ENCODE measurements at regions of chr1 and their contacts with region 1.

Region 1: GRCh38 chr1:181021811-181022434 is 747 bp downstream of the STX6 start:
- DNase-seq: peak; percentile 86
- H3K4me3 Mint-ChIP-seq: peak overlapping the region; percentile 93
- H3K27ac Mint-ChIP-seq: peak overlapping the region; percentile 91
- H3K4me1 Mint-ChIP-seq: peaks cover 19% of the 10 kb centered on the region
- H3K27me3 Mint-ChIP-seq: no peaks in the 10 kb centered on the region
- CTCF ChIP-seq: no peak

Region 2: GRCh38 chr1:180502360-180503273 is 519.3 kb before region 1 on chr1 and contains the start of gene ACBD6:
- CTCF ChIA-PET with region 1: interaction called, 3 read pairs
- POLR2A ChIA-PET with region 1: interaction called, 30 read pairs
- intact Hi-C with region 1: no loop called
- DNase-seq: peak; percentile 94
- H3K4me3 Mint-ChIP-seq: peak within 1 kb of the TSS; percentile 94
- H3K27ac Mint-ChIP-seq: peak within 1 kb of the TSS; percentile 97
- H3K4me1 Mint-ChIP-seq: peaks cover 29% of the 10 kb centered on the region
- H3K27me3 Mint-ChIP-seq: no peaks in the 10 kb centered on the region
- CTCF ChIP-seq: no peak
- total RNA-seq, gene ACBD6: 123 and 136 TPM in 2 replicates

Region 3: GRCh38 chr1:180923021-180923841 is 98.7 kb before region 1 on chr1:
- CTCF ChIA-PET with region 1: no interaction called
- POLR2A ChIA-PET with region 1: no interaction called
- intact Hi-C with region 1: no loop called
- DNase-seq: peak; percentile 53
- H3K4me3 Mint-ChIP-seq: no peak overlapping the region
- H3K27ac Mint-ChIP-seq: no peak overlapping the region
- H3K4me1 Mint-ChIP-seq: peaks cover 9% of the 10 kb centered on the region
- H3K27me3 Mint-ChIP-seq: no peaks in the 10 kb centered on the region
- CTCF ChIP-seq: no peak

Region 4: DNA sequence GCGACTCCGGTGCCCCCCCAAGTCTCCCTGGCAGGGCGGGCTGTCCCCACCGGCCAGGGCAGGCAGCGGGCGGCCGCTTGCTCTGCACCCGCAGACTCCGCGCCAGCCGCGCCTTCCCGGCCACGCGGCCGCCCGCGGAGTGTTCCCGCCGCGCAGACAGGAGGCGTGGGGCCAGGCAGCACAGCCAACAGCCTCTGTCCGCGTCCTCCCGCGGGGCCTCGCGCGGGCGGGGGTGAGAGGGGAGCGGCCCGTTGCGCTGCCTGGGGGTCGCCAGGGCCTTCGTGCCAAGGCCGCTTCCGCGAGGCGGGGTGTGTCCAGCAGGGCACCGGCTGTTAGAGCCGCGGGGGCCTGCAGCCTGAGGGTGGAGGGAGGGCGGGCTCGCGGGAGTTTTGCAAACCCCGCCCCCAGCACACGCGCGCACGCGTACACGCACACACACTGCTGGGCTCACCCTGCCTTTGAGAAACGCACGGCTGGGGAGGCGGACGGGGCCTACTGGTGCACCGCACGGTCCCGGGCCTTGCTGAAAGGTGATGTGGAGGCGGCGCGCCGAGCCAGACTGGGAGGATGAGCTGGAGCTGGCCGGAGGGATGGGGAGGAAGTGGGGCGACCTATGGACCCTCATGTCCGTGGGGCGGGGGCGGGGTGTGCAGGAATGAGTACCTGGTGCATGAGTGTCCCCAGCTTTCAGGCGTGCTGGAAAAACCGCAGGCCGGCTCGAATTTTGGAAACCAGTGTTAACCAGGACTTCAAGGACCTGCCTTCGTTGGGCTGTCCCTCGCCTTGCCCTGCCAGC is 67.7 kb before region 1 on chr1:
- CTCF ChIA-PET with region 1: interaction called, 3 read pairs
- POLR2A ChIA-PET with region 1: interaction called, 16 read pairs
- intact Hi-C with region 1: no loop called
- DNase-seq: no peak
- H3K4me3 Mint-ChIP-seq: no peak overlapping the region
- H3K27ac Mint-ChIP-seq: no peak overlapping the region
- H3K4me1 Mint-ChIP-seq: peaks cover 5% of the 10 kb centered on the region
- H3K27me3 Mint-ChIP-seq: no peaks in the 10 kb centered on the region
- CTCF ChIP-seq: no peak

Region 5: GRCh38 chr1:181033799-181034451 is 12.0 kb after region 1 on chr1 and contains the start of gene MR1:
- CTCF ChIA-PET with region 1: interaction called, 21 read pairs
- POLR2A ChIA-PET with region 1: interaction called, 229 read pairs
- intact Hi-C with region 1: no loop called
- DNase-seq: peak; percentile 94
- H3K4me3 Mint-ChIP-seq: peak within 1 kb of the TSS; percentile 91
- H3K27ac Mint-ChIP-seq: peak within 1 kb of the TSS; percentile 98
- H3K4me1 Mint-ChIP-seq: peaks cover 49% of the 10 kb centered on the region
- H3K27me3 Mint-ChIP-seq: no peaks in the 10 kb centered on the region
- CTCF ChIP-seq: no peak
- total RNA-seq, gene MR1: 33.4 and 46.6 TPM in 2 replicates

Region 6: GRCh38 chr1:181099152-181100014 is 77.5 kb after region 1 on chr1:
- CTCF ChIA-PET with region 1: interaction called, 5 read pairs
- POLR2A ChIA-PET with region 1: interaction called, 250 read pairs
- intact Hi-C with region 1: no loop called
- DNase-seq: peak; percentile 94
- H3K4me3 Mint-ChIP-seq: peak overlapping the region; percentile 26
- H3K27ac Mint-ChIP-seq: peak overlapping the region; percentile 72
- H3K4me1 Mint-ChIP-seq: peaks cover 65% of the 10 kb centered on the region
- H3K27me3 Mint-ChIP-seq: no peaks in the 10 kb centered on the region
- CTCF ChIP-seq: no peak

Region 7: DNA sequence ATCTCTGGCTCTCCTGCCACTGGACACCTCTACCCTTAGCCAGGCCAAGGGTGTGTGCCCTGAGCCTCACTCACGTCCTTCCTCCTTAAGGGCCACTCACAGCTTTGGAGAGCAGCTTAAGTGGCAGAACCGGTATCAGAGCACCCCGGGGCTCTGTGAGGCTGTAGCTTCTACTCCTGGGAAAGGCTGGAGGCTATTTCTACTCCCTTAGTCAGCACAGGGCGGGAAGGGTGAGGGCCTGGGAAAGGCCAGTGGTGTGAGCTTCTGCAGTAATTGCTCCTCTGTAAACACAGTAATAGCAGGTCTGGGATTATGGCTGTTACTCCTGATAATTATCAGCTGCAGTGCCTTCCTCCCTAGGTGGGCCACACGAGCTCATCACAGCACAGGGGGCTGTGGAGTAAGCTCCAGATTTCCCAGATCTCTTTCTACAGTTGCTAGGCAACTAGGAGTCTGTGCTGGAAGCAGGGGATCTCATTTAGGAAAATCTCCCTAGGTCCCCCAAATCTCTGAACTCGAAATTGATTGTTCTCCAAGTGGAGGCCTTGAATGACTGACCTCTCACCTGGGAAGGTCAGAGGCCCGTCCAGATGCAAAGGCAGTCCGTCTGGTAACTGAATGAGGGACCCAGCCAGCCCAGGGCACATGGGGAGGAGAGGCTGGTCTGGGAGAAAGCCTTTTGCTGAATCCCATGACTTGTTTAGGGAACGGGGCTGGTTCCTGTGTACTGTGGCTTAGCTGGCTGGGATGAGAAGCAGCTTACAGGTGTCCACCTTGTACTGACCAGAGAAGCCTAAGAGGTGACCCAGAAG is 95.9 kb after region 1 on chr1:
- CTCF ChIA-PET with region 1: no interaction called
- POLR2A ChIA-PET with region 1: interaction called, 23 read pairs
- intact Hi-C with region 1: no loop called
- DNase-seq: peak; percentile 89
- H3K4me3 Mint-ChIP-seq: no peak overlapping the region
- H3K27ac Mint-ChIP-seq: peak overlapping the region; percentile 77
- H3K4me1 Mint-ChIP-seq: peaks cover 50% of the 10 kb centered on the region
- H3K27me3 Mint-ChIP-seq: no peaks in the 10 kb centered on the region
- CTCF ChIP-seq: no peak

Region 8: DNA sequence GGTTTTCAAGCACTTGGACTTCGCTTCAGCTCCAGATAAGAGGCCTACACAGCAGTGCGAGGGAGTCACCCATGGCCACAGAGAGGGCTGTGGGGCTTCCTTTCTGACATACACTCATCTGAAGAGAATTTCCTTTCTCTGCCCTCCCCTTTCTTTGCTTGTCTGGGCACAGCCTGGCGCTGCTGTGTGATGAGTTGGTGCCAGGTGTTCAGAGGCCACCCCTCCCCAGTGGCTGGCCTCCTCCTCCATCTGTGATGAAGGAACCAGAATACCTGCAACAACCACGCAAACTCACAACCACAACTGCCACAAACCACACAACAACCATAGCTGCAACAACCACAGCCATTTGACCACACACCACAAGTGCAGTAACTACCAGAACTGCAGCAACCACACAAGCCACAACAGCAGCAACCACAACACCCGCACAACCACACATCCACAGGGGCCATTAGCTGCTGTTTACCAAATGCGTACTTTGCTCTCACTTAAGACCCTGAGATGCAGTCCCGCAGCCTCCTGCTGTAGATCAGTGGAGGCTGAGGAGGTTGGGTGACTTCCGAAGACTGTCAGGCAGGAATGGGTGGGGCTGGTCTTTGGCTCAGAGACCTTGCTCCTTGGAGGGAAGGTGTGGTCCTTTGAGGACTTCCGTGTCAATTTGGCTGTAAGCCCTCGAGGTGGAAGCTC is 137.7 kb after region 1 on chr1:
- CTCF ChIA-PET with region 1: no interaction called
- POLR2A ChIA-PET with region 1: interaction called, 11 read pairs
- intact Hi-C with region 1: no loop called
- DNase-seq: peak; percentile 94
- H3K4me3 Mint-ChIP-seq: peak overlapping the region; percentile 35
- H3K27ac Mint-ChIP-seq: peak overlapping the region; percentile 71
- H3K4me1 Mint-ChIP-seq: peaks cover 22% of the 10 kb centered on the region
- H3K27me3 Mint-ChIP-seq: no peaks in the 10 kb centered on the region
- CTCF ChIP-seq: no peak